BJ (cell line): ENCODE measurements at regions of chr6 and their contacts with region 1.

Region 1: GRCh38 chr6:19356692-19357091 is 480.5 kb upstream of the ID4 start:
- DNase-seq: no peak
- H3K4me3 ChIP-seq: no peak overlapping the region
- H3K27me3 ChIP-seq: no peaks in the 10 kb centered on the region; the same call in 1 of the 2 replicates
- CTCF ChIP-seq: no peak

Region 2: GRCh38 chr6:19287928-19288327 is 68.8 kb before region 1 on chr6:
- CTCF ChIA-PET with region 1: no interaction called
- POLR2A ChIA-PET with region 1: no interaction called
- DNase-seq: no peak
- H3K4me3 ChIP-seq: no peak overlapping the region
- H3K27me3 ChIP-seq: no peaks in the 10 kb centered on the region
- CTCF ChIP-seq: no peak

Region 3: DNA sequence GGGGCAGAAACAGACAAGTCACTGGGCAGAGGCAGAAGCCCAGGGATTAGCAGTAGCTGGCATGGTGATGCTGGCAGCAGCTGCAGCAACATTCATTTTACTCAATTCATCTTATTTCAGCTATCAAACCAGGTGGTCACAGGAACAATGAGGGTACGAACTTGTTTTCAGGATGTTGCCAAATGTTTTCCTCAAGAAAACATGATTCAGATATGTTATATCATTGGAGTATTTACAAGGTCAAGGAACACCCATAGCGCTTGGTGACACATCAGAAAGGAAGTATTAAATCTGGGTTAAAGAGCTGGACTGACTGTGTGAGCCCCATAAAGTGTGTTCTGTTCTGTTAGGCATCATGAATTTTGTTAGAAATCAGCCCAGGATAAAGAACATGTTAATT is 23.6 kb after region 1 on chr6:
- CTCF ChIA-PET with region 1: no interaction called
- POLR2A ChIA-PET with region 1: interaction called, 19 read pairs
- DNase-seq: peak; percentile 28
- H3K4me3 ChIP-seq: no peak overlapping the region
- H3K27me3 ChIP-seq: no peaks in the 10 kb centered on the region
- CTCF ChIP-seq: no peak